Activated B cell treated with CpG ODN at 0.5 μM for 24 hours (primary cell): ENCODE measurements at regions of chr9 and their contacts with region 1.

Region 1: GRCh38 chr9:112271466-112272092 is 61.8 kb downstream of the PTBP3 start:
- DNase-seq: no peak
- ATAC-seq: no peak
- H3K4me3 Mint-ChIP-seq: no peak overlapping the region
- H3K27ac Mint-ChIP-seq: no peak overlapping the region
- H3K4me1 Mint-ChIP-seq: peaks cover 23% of the 10 kb centered on the region
- H3K27me3 Mint-ChIP-seq: no peaks in the 10 kb centered on the region
- CTCF ChIP-seq: no peak

Region 2: GRCh38 chr9:112200690-112201089 is 70.9 kb before region 1 on chr9:
- CTCF ChIA-PET with region 1: no interaction called
- POLR2A ChIA-PET with region 1: interaction called, 12 read pairs
- intact Hi-C with region 1: no loop called
- DNase-seq: no peak
- ATAC-seq: no peak
- H3K4me3 Mint-ChIP-seq: no peak overlapping the region
- H3K27ac Mint-ChIP-seq: no peak overlapping the region
- H3K4me1 Mint-ChIP-seq: peaks cover 2% of the 10 kb centered on the region
- H3K27me3 Mint-ChIP-seq: no peaks in the 10 kb centered on the region
- CTCF ChIP-seq: no peak